GM10248 (cell line): ENCODE measurements at regions of chr22 and their contacts with region 1.

Region 1: GRCh38 chr22:28019881-28020871 is 101.1 kb upstream of the PITPNB start:
- DNase-seq: peak; percentile 78
- CTCF ChIP-seq: peak; percentile 92

Region 2: DNA sequence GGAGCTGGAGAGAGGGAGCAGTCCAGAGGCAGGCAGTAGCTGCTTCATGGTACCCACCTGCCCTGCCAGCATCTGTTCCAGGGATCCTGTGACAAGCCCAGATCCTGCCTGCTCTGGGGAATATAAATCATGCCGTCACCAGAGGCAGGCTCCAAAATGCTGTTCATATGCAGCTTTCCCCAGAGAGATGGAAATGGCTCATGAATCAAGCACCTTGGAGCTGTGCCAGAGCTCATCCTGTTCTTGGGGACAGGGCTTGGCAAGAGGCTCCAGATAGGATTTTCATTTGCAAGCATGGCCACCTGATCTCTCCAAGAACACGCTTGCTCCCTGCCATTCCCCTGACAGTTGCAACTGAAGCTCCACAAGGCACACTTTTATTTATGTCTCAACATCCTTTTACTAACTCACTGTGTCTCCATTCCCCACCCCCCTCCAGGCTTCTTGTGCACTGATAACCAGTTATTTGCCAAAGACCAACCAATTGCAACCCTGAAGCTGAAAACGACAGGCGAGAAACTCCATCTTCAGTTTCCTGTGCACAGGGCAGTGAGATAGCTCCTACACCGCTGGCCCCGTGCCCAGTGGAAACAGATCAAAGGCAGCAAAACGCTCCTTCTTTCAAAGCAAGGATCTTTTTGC is 14.7 kb after region 1 on chr22:
- CTCF ChIA-PET with region 1: interaction called, 27 read pairs
- POLR2A ChIA-PET with region 1: no interaction called
- DNase-seq: no peak
- CTCF ChIP-seq: no peak

Region 3: DNA sequence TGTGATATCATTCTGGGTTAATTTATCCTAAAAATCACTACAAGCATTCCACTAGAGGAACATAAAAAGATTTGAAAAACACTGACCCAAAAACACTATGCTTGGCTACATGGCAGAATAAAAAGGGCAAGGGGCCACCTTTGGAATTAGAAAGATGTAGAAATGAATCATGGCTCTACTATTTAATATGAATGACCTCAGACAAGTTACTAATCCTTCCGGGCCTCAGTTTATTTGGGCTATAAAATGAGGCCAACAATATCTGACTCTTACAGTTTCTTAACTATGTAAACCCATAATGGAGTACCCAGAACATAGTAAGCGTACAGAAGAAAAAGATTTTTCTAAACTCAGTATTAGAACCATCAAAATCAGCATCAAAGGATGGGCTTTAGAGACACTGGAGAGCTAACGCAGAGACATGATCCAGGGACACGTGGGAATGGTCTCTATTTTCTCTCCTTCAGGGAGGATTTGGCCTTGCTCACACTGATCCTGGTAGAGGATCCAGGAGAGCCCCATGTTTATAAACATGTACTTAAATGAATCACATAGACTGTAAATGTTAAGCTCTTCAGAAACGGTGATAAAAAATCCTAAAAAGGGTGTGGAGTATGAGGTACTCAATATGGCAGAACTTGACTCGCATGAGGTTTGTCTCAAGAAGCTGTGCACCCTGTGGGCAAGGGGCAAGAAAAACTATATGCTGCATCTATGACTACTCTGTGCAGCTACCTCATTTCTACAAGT is 187.3 kb after region 1 on chr22:
- CTCF ChIA-PET with region 1: no interaction called
- POLR2A ChIA-PET with region 1: no interaction called
- DNase-seq: no peak
- CTCF ChIP-seq: no peak

Region 4: GRCh38 chr22:28442264-28442710 is 422.1 kb after region 1 on chr22:
- CTCF ChIA-PET with region 1: interaction called, 18 read pairs
- POLR2A ChIA-PET with region 1: no interaction called
- DNase-seq: peak; percentile 86
- CTCF ChIP-seq: peak; percentile 89

Region 5: DNA sequence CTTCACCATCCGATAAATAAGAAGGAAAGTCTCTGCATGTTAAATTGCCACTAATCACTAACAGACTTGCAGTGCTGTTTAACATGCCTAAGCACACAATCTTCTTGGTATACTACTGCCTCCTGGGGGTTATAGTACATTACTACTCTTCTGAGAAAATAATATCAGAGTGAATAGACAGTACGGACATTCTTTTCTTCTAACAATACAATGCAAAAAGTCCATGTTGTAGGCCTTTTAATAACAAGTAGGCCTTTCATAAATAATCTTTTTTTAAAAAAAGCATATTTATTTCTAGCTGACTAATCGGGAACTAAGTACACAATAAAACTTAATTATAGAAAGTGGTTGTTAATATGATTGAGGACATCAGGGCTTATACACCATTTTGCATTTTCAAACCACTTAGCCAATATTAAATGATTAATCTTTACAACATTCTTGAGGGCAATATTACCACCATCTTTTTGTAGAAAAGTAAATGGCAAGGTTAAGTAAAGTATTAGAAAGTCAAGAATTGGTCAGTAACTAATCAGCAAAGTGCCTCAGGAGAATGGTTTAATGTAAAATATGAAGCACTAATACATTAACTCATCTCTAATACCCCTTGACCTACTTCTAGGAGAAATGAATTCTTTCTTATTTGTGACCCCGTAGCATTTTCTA is 574.8 kb after region 1 on chr22:
- CTCF ChIA-PET with region 1: interaction called, 65 read pairs
- POLR2A ChIA-PET with region 1: no interaction called
- DNase-seq: peak; percentile 41
- CTCF ChIP-seq: peak; percentile 58